ENCODE measurements at regions of chr12 and their contacts with region 1.

Region 1: DNA sequence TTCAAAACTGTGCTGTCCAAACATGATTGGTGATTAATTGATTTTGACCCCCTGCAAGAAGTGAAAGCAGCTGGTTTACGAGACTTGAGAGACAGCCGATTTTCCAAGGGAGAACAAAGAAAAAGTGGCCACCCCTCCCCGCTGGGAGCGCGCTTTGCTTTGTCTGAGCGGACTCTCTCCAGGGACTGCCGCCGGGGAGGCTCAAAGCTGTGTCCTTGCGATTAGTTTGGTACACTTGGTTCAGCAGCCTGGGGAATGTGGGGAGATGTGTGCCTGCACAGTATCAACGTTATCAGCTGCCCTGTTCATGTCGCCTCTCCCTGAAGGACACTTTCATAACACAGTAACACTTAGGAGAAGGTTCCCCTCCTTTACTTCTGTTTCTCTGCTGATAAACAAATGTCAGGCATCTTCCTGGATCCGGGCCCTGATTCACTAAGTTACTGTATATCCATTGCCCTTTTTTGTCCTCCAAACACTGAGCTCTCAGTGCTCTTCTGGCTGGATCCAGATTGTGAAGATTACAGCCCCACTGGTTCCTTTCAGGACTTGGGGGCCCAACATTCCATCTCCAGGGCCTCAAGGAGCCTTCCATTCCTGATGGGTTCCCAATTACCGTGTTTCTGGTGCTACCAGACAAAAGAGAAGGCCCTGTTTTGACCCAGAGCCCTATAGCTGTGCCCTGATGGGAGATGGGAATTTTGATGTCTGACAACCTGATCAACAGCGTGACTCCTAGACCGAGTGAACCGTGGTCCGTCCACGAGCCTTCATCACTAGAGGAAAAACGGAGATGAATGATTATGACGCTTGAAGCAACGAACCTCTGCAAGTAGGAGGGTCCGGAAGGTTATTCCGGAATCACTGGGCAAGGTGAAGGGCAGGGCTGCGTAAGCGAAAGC is 31.7 kb upstream of the TUBA1C start:
- DNase-seq: peak in 1 of 9 experiments; percentile 13
- ATAC-seq: no peak
- H3K4me3 ChIP-seq: no peak overlapping the region
- H3K4me3 Mint-ChIP-seq: peak overlapping the region; percentile 69
- H3K27ac ChIP-seq: no peak overlapping the region
- H3K27ac Mint-ChIP-seq: no peak overlapping the region
- H3K4me1 ChIP-seq: peaks cover 8% of the 10 kb centered on the region
- H3K4me1 Mint-ChIP-seq: peaks cover 10% of the 10 kb centered on the region
- H3K27me3 ChIP-seq: no peaks in the 10 kb centered on the region
- H3K27me3 Mint-ChIP-seq: no peaks in the 10 kb centered on the region
- CTCF ChIP-seq: no peak

Region 2: GRCh38 chr12:49110464-49111155 is 122.6 kb before region 1 on chr12 and contains the start of gene LMBR1L:
- CTCF ChIA-PET with region 1: interaction called, 3 read pairs
- POLR2A ChIA-PET with region 1: interaction called, 4 read pairs
- intact Hi-C with region 1: loop called (anchors 1 kb)
- DNase-seq: peak; percentile 93 to 99 (median 96)
- ATAC-seq: peak; percentile 90
- H3K4me3 ChIP-seq: peak within 1 kb of the TSS; percentile 82 to 92
- H3K4me3 Mint-ChIP-seq: peak within 1 kb of the TSS; percentile 98
- H3K27ac ChIP-seq: peak within 1 kb of the TSS; percentile 92 to 97
- H3K27ac Mint-ChIP-seq: peak within 1 kb of the TSS; percentile 98
- H3K4me1 ChIP-seq: peaks cover 18% of the 10 kb centered on the region
- H3K4me1 Mint-ChIP-seq: peaks cover 44% of the 10 kb centered on the region
- H3K27me3 ChIP-seq: no peaks in the 10 kb centered on the region
- H3K27me3 Mint-ChIP-seq: no peaks in the 10 kb centered on the region
- CTCF ChIP-seq: peak; percentile 53
- total RNA-seq, gene LMBR1L: 464 to 497 TPM

Region 3: GRCh38 chr12:49244176-49244575 is 11.0 kb after region 1 on chr12:
- CTCF ChIA-PET with region 1: interaction called, 12 read pairs
- POLR2A ChIA-PET with region 1: no interaction called
- intact Hi-C with region 1: no loop called
- DNase-seq: no peak
- ATAC-seq: no peak
- H3K4me3 ChIP-seq: no peak overlapping the region
- H3K4me3 Mint-ChIP-seq: no peak overlapping the region
- H3K27ac ChIP-seq: no peak overlapping the region
- H3K27ac Mint-ChIP-seq: no peak overlapping the region
- H3K4me1 ChIP-seq: no peaks in the 10 kb centered on the region
- H3K4me1 Mint-ChIP-seq: no peaks in the 10 kb centered on the region
- H3K27me3 ChIP-seq: no peaks in the 10 kb centered on the region
- H3K27me3 Mint-ChIP-seq: no peaks in the 10 kb centered on the region
- CTCF ChIP-seq: no peak

Region 4: DNA sequence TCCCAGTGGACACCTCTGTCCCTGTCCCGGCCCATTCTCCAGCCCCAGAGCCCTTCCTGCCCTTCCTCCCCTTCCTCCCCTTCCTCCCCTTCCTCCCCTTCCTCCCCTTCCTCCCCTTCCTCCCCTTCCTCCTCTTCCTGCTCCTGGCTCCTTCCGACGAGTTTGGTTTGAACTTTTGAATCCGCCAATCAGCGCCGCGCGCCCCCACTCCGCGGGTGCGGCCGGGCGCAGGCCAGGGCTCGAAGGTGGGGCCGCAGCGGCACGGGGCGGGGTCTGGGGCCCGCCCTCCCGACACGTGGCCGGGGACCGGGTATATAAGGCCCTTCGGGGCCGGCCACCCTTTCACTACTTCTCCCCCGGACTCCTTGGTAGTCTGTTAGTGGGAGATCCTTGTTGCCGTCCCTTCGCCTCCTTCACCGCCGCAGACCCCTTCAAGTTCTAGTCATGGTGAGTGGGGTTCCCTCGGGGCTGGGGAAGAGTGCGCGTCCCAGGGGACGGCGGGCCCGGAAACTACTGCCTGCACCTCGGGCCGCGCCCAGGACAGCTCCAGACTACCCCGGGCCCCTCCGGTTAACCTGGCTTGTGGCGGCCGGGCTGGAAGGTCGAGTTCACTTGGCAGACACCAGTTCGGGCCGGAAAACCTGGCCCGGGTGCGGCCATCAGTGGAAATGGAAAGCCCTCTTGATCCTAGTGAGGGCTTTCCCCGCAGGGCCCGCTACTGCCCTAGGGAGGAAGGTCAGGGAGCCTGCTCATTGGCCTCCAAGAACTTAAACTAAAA is 31.7 kb after region 1 on chr12 and contains the start of gene TUBA1C:
- CTCF ChIA-PET with region 1: interaction called, 5 read pairs
- POLR2A ChIA-PET with region 1: interaction called, 6 read pairs
- intact Hi-C with region 1: loop called (anchors 1 to 2 kb)
- DNase-seq: peak; percentile 65 to 91 (median 84)
- ATAC-seq: peak; percentile 87
- H3K4me3 ChIP-seq: peak within 1 kb of the TSS; percentile 89 to 92
- H3K4me3 Mint-ChIP-seq: peak within 1 kb of the TSS; percentile 92
- H3K27ac ChIP-seq: peak within 1 kb of the TSS; percentile 75 to 84
- H3K27ac Mint-ChIP-seq: peak within 1 kb of the TSS; percentile 90
- H3K4me1 ChIP-seq: peaks cover 10% of the 10 kb centered on the region
- H3K4me1 Mint-ChIP-seq: peaks cover 25% of the 10 kb centered on the region
- H3K27me3 ChIP-seq: no peaks in the 10 kb centered on the region
- H3K27me3 Mint-ChIP-seq: no peaks in the 10 kb centered on the region
- CTCF ChIP-seq: no peak
- total RNA-seq, gene TUBA1C: 25.5 to 30.7 TPM